Activated T-helper 1 cell treated with anti-CD3 and anti-CD28 coated beads, Interleukin-12 subunit alpha, Interleukin-12 subunit beta, Interleukin-2, Interleukin-4 antibody, amounts not matched to agents 30 ng/mL and 10 ng/mL and 1 ng/mL, durations not matched to agents 14 hours and 24 hours and 36 hours (primary cell): ENCODE measurements at regions of chr3 and their contacts with region 1.

Region 1: DNA sequence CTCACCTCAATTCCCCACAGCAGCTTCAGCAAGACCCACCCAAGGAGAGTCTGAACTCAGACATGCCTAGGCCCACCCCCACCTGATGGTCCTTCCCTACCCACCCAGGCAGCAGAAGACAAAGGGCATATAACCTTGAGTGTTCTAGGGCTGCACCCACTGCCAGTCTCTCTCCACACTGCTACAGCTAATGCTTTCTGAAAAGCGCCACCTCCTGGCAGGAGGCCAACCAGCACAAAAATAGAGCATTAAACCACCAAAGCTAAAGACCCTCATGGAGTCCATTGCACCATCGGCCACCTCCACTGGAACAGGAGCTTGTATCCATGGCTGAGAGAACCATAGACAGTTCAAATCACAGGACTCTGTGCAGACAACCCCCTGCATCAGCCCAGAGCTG is 11.3 kb upstream of the RPL39L start:
- DNase-seq: peak; percentile 44
- H3K4me3 Mint-ChIP-seq: no peak overlapping the region
- H3K27ac Mint-ChIP-seq: no peak overlapping the region
- H3K4me1 Mint-ChIP-seq: no peaks in the 10 kb centered on the region
- H3K27me3 Mint-ChIP-seq: peaks cover 41% of the 10 kb centered on the region

Region 2: DNA sequence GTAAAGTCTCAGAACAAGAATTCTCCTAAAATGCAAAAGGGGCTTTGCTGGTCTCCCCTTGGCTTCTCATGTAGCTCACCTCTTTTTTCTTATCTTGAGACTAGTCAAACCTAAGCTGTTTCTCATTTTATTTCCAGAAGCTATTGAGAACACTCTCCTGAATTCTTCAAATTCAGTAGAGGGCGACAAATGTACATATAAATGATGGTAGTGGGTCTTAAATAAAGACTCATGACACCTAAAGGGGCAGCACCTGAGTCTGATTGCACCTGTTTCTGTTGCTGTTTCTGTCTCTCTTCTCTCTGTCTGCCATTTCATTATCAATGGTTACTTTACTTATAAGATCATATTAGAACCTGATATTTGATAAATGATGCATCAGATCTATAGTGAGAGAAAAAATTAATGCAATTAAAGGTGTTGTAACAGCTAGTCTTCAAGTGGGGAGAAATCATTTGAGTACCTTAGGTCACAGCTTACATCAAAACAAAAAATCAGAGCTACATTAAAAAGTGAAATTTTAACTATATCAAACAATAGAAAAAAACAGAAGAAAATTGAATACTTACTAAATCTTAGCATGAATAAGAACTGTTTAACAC is 301.1 kb before region 1 on chr3:
- intact Hi-C with region 1: loop called (anchors 1 kb)
- DNase-seq: no peak
- H3K4me3 Mint-ChIP-seq: no peak overlapping the region
- H3K27ac Mint-ChIP-seq: no peak overlapping the region
- H3K4me1 Mint-ChIP-seq: peaks cover 26% of the 10 kb centered on the region
- H3K27me3 Mint-ChIP-seq: peaks cover 13% of the 10 kb centered on the region

Region 3: GRCh38 chr3:187112934-187113793 is 37.4 kb before region 1 on chr3:
- intact Hi-C with region 1: loop called (anchors 1 kb)
- DNase-seq: no peak
- H3K4me3 Mint-ChIP-seq: no peak overlapping the region
- H3K27ac Mint-ChIP-seq: no peak overlapping the region
- H3K4me1 Mint-ChIP-seq: peaks cover 9% of the 10 kb centered on the region
- H3K27me3 Mint-ChIP-seq: no peaks in the 10 kb centered on the region

Region 4: DNA sequence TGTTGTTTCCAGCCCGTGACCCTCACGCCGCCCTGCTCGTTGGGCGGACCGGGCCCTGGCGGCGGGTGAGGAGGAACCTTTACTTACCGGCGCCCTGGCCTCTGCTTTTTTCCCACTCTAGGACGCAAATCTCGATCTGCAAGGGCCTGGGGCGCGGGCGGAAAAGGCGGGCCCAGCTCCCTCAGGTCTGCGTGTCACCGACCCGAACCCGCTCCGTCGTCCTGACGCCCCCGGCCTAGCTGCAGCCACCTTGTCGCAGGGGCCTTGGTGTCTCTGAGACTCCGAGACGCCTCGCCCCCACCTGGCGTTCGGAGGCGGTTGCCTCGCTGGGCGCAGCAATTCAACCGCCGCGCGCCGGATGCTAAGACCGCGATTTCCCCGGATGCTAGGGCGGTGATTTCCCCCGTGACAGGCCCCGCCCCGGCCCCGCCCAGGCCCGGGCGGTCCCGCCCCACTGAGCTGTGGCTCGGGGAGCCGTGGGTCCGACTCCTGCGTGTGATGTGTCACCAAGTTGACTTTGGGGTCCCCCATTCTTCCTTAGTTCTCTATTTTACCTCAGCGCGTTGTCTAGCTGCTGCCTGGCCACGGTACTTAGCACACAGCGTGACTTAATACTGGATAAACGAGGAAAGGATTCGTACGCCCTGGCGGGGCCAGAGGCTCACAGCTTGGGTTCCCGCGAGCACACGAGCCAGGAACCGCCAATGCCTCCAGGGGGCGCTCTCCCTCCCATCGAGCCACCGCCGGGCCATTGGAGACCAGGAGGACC is 11.3 kb before region 1 on chr3 and contains the start of gene RPL39L:
- intact Hi-C with region 1: loop called (anchors 1 kb)
- DNase-seq: peak; percentile 91
- H3K4me3 Mint-ChIP-seq: peak within 1 kb of the TSS; percentile 92
- H3K27ac Mint-ChIP-seq: peak within 1 kb of the TSS; percentile 96
- H3K4me1 Mint-ChIP-seq: peaks cover 34% of the 10 kb centered on the region
- H3K27me3 Mint-ChIP-seq: peaks cover 3% of the 10 kb centered on the region
- total RNA-seq, gene RPL39L: 7.5 and 8.3 TPM in 2 replicates